Activated CD4-positive, alpha-beta memory T cell treated with anti-CD3 and anti-CD28 coated beads for 36 hours (primary cell): ENCODE measurements at regions of chr2 and their contacts with region 1.

Region 1: DNA sequence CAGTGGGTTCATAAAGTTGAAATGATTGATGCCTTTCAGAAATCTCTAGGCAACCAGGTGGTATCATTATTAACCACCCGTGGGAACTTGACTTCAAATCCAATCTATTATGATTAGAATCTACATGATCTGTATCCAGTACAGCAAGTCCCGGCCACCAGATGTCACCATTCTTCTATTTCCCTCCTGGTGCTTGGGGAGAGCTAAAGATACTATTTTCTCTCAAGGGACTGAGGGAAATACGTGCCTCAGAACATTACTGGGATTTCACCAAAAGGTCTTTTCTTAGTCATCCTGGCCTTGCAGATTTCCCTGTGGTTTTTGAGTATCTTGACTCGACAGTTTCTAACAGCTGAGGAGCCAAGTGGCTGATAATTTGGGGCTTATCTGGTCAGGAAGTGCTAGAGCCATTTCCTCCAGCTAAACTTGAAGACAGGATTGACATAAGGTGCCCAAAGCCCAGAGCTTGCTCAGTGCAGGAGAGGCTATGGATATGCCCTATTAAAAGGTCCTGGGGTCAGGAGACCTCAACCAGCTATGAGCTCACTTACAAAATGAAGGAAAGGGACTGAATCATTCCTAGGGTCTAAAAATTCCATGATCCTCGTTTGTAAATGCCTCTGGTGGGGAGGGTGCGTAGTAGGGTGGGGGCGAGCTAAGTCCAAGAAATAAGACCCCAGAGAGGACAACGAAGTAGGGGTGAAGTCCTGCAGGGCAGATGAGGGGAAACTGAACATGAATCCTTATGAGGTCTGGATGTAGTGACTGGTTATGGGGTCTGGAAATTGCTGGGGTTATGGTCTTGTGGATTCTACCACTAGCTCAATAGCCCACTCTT is 135.4 kb upstream of the MGAT5 start:
- DNase-seq: peak; percentile 91
- H3K4me3 Mint-ChIP-seq: peak overlapping the region; percentile 95
- H3K27ac Mint-ChIP-seq: no peak overlapping the region
- H3K4me1 Mint-ChIP-seq: peaks cover 35% of the 10 kb centered on the region
- H3K27me3 Mint-ChIP-seq: peaks cover 4% of the 10 kb centered on the region

Region 2: DNA sequence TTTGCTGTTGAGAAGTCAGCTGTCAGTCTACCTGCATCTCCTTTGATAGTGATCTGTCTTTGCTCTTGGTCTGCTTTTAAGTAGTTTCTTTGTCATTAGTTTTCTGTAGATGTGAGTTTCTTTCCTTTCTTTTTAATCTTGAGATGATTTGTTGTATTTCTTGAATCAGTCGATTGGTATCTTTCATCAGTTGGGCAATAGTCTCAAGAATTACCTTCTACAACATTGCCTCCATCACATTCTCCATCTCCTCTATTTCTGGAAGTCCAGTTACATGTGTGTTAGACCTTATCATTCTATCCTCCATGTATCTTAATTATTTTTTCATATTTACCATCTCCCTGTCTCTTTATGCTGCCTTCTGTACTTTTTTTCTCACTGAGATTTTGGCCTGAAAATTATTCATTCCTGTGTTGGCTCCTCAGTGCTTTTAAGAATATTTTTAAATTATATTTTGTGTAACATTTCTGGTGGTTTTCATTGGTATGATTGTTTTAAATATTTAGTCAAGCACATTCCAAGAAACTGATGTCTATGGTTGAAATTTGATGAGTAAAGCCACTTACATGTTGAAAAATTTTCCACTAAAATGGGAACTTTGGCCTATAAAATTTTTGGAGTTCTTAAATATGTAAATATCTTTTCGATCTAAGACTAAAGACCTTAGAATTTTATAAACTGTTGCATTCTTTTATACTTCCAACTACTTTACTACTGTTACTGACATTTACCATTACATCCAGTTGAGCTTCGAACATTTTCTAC is 104.1 kb before region 1 on chr2:
- CTCF ChIA-PET with region 1: no interaction called
- POLR2A ChIA-PET with region 1: no interaction called
- intact Hi-C with region 1: no loop called
- DNase-seq: no peak
- H3K4me3 Mint-ChIP-seq: no peak overlapping the region
- H3K27ac Mint-ChIP-seq: no peak overlapping the region
- H3K4me1 Mint-ChIP-seq: no peaks in the 10 kb centered on the region
- H3K27me3 Mint-ChIP-seq: no peaks in the 10 kb centered on the region

Region 3: GRCh38 chr2:134137182-134137611 is 18.7 kb after region 1 on chr2:
- CTCF ChIA-PET with region 1: interaction called, 10 read pairs
- POLR2A ChIA-PET with region 1: interaction called, 4 read pairs
- intact Hi-C with region 1: loop called (anchors 2 kb)
- DNase-seq: peak; percentile 45
- H3K4me3 Mint-ChIP-seq: no peak overlapping the region
- H3K27ac Mint-ChIP-seq: peak overlapping the region; percentile 75
- H3K4me1 Mint-ChIP-seq: peaks cover 80% of the 10 kb centered on the region
- H3K27me3 Mint-ChIP-seq: no peaks in the 10 kb centered on the region

Region 4: DNA sequence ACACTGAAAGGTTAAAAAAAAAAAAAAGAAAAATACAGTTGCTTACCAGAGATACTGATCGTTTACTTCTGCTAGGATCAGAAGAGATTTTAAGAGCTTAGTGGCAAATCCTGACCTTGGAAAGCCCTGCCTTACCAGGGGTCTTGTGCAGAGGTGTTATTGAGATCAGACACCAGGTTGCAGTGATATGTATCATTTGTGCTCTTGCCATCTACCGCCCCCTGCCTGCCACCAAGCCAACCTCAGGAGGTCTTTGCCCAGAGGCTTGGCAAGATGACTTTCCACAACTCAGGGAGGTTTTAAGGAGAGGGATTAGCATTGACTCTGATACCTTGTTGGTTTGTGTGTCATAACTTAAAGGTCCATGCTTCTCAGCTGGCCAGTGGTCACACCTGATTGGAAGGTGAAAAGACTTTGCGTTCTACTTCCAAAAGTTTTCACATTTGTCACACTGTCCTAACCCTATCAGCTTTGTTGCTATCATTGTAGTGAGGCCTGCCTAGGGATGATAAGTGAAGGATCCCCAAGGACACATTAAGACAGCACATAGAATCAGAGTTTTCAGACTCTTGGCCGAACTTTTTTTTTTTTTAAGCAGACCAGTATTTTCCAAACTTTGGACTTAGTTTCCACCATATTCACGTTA is 89.2 kb after region 1 on chr2:
- CTCF ChIA-PET with region 1: interaction called, 111 read pairs
- POLR2A ChIA-PET with region 1: interaction called, 21 read pairs
- intact Hi-C with region 1: loop called (anchors 5 kb)
- DNase-seq: peak; percentile 76
- H3K4me3 Mint-ChIP-seq: no peak overlapping the region
- H3K27ac Mint-ChIP-seq: no peak overlapping the region
- H3K4me1 Mint-ChIP-seq: peaks cover 14% of the 10 kb centered on the region
- H3K27me3 Mint-ChIP-seq: no peaks in the 10 kb centered on the region

Region 5: GRCh38 chr2:134245340-134245984 is 127.0 kb after region 1 on chr2:
- CTCF ChIA-PET with region 1: interaction called, 92 read pairs
- POLR2A ChIA-PET with region 1: interaction called, 8 read pairs
- intact Hi-C with region 1: loop called (anchors 1 kb)
- DNase-seq: peak; percentile 82
- H3K4me3 Mint-ChIP-seq: no peak overlapping the region
- H3K27ac Mint-ChIP-seq: no peak overlapping the region
- H3K4me1 Mint-ChIP-seq: peaks cover 82% of the 10 kb centered on the region
- H3K27me3 Mint-ChIP-seq: peaks cover 2% of the 10 kb centered on the region

Region 6: DNA sequence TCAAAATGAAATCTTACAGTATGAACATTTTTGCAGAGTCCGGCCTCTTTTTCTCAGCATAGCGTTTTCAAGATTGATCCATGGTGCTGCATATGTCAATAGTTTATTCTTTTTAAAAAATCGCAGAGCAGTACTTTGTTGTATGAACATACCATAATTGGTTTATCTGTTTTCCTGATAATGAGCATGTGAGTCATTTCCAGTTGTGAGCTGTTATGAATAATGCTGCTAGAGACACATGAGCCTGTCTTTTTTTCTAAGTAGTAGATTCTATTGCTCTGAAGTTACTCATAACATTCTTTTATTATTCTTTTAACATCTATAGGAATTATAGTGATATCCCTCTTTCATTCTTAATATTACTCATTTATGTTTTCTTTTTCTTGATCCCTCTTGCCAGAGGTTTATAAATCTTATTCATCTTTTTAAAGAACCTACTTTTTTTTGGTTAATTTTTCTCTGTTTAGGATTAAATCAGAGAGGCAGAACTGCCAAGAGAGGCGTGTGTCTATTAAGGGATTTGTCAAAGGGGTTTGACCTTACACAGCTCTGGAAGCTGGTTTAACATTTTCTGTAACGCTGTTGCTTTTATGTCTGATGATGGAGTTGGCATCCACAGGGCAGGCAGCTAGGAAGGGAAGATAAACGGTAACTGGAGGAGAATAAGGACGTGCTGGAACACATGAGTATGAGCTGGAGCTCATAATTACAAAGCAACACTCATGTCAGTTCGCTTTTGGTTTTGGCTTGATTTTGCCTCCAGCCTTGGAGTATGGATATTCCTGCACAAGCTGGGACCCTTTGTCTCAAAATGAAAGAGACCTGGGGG is 182.8 kb after region 1 on chr2:
- CTCF ChIA-PET with region 1: interaction called, 10 read pairs
- POLR2A ChIA-PET with region 1: interaction called, 5 read pairs
- intact Hi-C with region 1: no loop called
- DNase-seq: no peak
- H3K4me3 Mint-ChIP-seq: no peak overlapping the region
- H3K27ac Mint-ChIP-seq: no peak overlapping the region
- H3K4me1 Mint-ChIP-seq: peaks cover 49% of the 10 kb centered on the region
- H3K27me3 Mint-ChIP-seq: no peaks in the 10 kb centered on the region

Region 7: DNA sequence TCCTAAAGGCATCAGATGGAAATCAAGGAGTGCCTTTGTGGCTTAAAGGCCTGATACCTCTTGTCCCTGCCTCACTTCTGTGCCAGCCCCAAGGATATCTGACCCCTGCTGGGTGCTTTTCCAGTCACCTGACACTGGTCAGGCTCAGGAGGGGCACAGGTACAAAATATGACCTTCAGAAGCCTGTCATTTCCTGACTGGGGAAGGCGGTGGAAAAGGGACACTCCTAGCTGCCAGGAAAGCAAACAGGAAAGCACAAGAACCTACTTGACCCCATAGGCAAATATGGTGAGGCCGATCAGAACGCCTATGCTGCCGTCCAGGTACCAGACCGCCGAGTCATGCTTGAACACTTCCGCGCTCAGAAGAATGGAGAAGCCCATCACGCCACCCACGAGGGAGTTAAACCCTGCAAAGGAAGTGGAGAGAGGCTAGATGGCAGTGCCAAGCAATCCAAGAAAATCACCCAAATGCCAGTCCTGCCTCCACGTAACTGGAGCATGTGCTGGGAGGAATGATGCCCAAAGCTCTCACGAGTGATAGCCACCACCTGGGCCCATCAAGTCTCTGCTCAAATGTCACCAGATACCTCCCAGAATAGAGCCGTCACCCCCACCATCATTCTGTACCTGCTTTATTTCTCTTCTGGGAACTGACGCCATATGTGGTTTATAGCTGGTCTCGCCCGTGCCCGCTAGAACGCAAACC is 339.4 kb after region 1 on chr2:
- CTCF ChIA-PET with region 1: interaction called, 42 read pairs
- POLR2A ChIA-PET with region 1: interaction called, 3 read pairs
- intact Hi-C with region 1: no loop called
- DNase-seq: no peak
- H3K4me3 Mint-ChIP-seq: no peak overlapping the region
- H3K27ac Mint-ChIP-seq: no peak overlapping the region
- H3K4me1 Mint-ChIP-seq: no peaks in the 10 kb centered on the region
- H3K27me3 Mint-ChIP-seq: no peaks in the 10 kb centered on the region